IMR-90 (cell line): ENCODE measurements at regions of chr13 and their contacts with region 1.

Region 1: DNA sequence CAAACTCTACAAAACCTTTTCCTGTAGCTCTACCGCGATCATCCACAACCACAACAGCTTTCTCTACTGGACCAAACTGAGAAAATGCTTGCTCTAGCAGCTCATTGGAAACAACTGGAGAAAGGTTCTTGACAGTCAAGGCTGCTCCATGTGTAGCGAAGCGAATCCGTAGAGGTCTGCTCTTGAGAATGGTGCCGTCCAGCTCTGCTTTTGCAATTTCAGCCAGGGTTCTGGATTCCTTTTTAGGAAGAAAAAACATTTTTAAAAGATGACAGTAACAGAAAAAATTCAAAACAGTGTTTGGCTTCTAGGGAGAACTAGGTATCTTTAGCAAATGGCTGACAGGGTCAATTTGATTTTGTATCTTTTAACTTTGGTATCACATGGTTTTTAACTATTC is 10.4 kb downstream of the PSPC1 start:
- DNase-seq: peak; percentile 3
- ATAC-seq: peak; percentile 42; the same call in 1 of the 2 replicates
- H3K4me3 ChIP-seq: no peak overlapping the region
- H3K27ac ChIP-seq: peak overlapping the region; percentile 66; the same call in 1 of the 2 replicates
- H3K4me1 ChIP-seq: peaks cover 4% of the 10 kb centered on the region; the same call in 1 of the 2 replicates
- H3K27me3 ChIP-seq: no peaks in the 10 kb centered on the region
- CTCF ChIP-seq: no peak
- POLR2A ChIP-seq: no peak
- RAD21 ChIP-seq: no peak

Region 2: GRCh38 chr13:19673473-19674430 is 98.6 kb before region 1 on chr13:
- CTCF ChIA-PET with region 1: no interaction called
- POLR2A ChIA-PET with region 1: no interaction called
- dilution Hi-C with region 1: no loop called
- in situ Hi-C with region 1: loop called (anchors 10 kb)
- intact Hi-C with region 1: no loop called
- DNase-seq: no peak
- ATAC-seq: no peak
- H3K4me3 ChIP-seq: no peak overlapping the region
- H3K27ac ChIP-seq: no peak overlapping the region
- H3K4me1 ChIP-seq: peaks cover 3% of the 10 kb centered on the region
- H3K27me3 ChIP-seq: no peaks in the 10 kb centered on the region
- CTCF ChIP-seq: no peak
- POLR2A ChIP-seq: no peak
- RAD21 ChIP-seq: no peak